IMR-90 (cell line): ENCODE measurements at regions of chr6 and their contacts with region 1.

Region 1: GRCh38 chr6:24359640-24360454 is 2.0 kb upstream of the DCDC2 start:
- DNase-seq: peak; percentile 65
- ATAC-seq: peak; percentile 90
- H3K4me3 ChIP-seq: peak overlapping the region; percentile 43
- H3K27ac ChIP-seq: no peak overlapping the region
- H3K4me1 ChIP-seq: peaks cover 4% of the 10 kb centered on the region; the same call in 1 of the 2 replicates
- H3K27me3 ChIP-seq: peaks cover 18% of the 10 kb centered on the region
- CTCF ChIP-seq: peak; percentile 65
- POLR2A ChIP-seq: no peak
- RAD21 ChIP-seq: peak; percentile 23; the same call in 1 of the 2 replicates

Region 2: DNA sequence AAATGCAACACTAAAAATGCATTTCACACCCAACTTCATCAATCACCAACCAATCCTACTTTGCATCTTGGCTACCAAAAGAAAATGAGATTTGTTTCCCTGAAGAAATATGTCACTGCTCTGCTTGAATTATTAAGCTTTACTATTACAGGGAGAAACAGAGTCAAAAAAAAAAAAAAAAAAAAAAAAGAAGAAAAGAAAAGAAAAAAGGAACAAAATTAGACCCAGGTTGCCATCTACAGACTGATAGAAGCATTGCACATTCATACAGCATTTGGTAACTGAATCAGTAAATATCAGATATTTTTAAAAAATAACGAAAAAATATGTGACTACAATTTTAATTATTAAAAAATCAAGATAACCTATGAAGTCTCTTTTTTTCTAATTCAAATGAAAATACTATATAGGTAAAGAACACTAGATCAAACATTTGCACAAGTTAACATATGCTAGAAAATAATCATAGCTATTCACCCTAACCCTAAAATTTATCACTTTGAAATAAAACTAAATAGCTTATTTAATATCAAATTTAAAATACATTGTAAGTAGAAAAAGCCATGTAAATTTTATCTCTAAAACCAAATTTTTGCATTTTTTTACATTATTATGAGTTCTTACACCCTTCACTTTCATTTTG is 85.3 kb before region 1 on chr6:
- CTCF ChIA-PET with region 1: no interaction called
- POLR2A ChIA-PET with region 1: no interaction called
- dilution Hi-C with region 1: no loop called
- in situ Hi-C with region 1: no loop called
- intact Hi-C with region 1: no loop called
- DNase-seq: peak; percentile 23
- ATAC-seq: no peak
- H3K4me3 ChIP-seq: no peak overlapping the region
- H3K27ac ChIP-seq: no peak overlapping the region
- H3K4me1 ChIP-seq: no peaks in the 10 kb centered on the region
- H3K27me3 ChIP-seq: no peaks in the 10 kb centered on the region
- CTCF ChIP-seq: peak; percentile 52
- POLR2A ChIP-seq: no peak
- RAD21 ChIP-seq: peak; percentile 35; the same call in 1 of the 2 replicates

Region 3: GRCh38 chr6:24385536-24386269 is 25.9 kb after region 1 on chr6:
- CTCF ChIA-PET with region 1: interaction called, 4 read pairs
- POLR2A ChIA-PET with region 1: no interaction called
- dilution Hi-C with region 1: no loop called
- in situ Hi-C with region 1: no loop called
- intact Hi-C with region 1: loop called (anchors 1 kb)
- DNase-seq: no peak
- ATAC-seq: no peak
- H3K4me3 ChIP-seq: no peak overlapping the region
- H3K27ac ChIP-seq: no peak overlapping the region
- H3K4me1 ChIP-seq: no peaks in the 10 kb centered on the region
- H3K27me3 ChIP-seq: no peaks in the 10 kb centered on the region
- CTCF ChIP-seq: no peak
- POLR2A ChIP-seq: no peak
- RAD21 ChIP-seq: no peak

Region 4: DNA sequence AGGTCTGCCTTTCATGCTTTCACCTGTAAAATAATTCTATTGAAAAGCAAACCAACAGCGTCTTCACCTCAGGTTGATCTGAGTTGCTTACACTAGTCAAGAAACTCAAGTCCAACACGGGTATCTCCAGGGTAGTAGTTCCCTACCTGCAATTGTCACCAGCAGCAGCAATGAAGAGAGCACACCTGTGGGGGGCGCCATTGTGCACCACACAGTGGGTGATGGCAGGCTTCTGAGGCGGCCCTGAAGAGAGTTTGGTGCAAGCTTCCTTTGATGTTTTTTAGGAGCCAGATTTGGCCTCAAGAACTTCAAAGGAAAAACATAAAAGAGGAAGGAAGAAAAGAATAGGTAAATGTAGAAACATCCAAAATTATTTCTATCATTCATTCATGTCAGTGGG is 241.1 kb after region 1 on chr6:
- CTCF ChIA-PET with region 1: no interaction called
- POLR2A ChIA-PET with region 1: no interaction called
- dilution Hi-C with region 1: no loop called
- in situ Hi-C with region 1: no loop called
- intact Hi-C with region 1: no loop called
- DNase-seq: no peak
- ATAC-seq: no peak
- H3K4me3 ChIP-seq: no peak overlapping the region
- H3K27ac ChIP-seq: no peak overlapping the region
- H3K4me1 ChIP-seq: no peaks in the 10 kb centered on the region
- H3K27me3 ChIP-seq: peaks cover 4% of the 10 kb centered on the region; the same call in 1 of the 2 replicates
- CTCF ChIP-seq: no peak
- POLR2A ChIP-seq: no peak
- RAD21 ChIP-seq: no peak